WTC11 (cell line): ENCODE measurements at regions of chr16 and their contacts with region 1.

Region 1: DNA sequence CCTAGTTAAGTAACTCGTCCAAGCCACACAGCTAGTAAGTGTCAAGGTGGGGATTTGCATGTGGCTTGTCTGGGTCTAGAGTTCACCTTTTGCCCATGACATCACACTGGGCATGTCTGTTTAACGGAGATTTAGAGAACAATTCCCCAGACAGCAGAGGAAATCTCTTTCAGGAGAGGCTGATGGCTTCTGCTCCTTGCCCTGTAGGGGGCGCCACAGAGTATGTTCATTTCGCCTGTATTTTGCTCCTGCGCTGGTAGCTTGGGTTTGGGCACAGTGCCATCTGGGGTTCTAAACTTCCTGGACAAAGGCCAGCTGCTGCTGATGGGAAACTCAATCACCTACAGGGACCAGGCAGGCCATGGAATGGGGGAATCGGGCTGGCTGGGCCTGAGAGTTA is 20.4 kb downstream of the OTOA start:
- DNase-seq: peak; percentile 66
- ATAC-seq: peak; percentile 44; the same call in 1 of the 2 replicates
- H3K4me3 Mint-ChIP-seq: no peak overlapping the region
- H3K27ac Mint-ChIP-seq: no peak overlapping the region
- H3K4me1 Mint-ChIP-seq: no peaks in the 10 kb centered on the region
- H3K27me3 Mint-ChIP-seq: peaks cover 11% of the 10 kb centered on the region; the same call in 1 of the 2 replicates
- CTCF ChIP-seq: peak; percentile 90

Region 2: GRCh38 chr16:21673469-21673868 is 10.7 kb before region 1 on chr16:
- CTCF ChIA-PET with region 1: interaction called, 11 read pairs
- POLR2A ChIA-PET with region 1: no interaction called
- DNase-seq: no peak
- ATAC-seq: no peak
- H3K4me3 Mint-ChIP-seq: no peak overlapping the region
- H3K27ac Mint-ChIP-seq: no peak overlapping the region
- H3K4me1 Mint-ChIP-seq: no peaks in the 10 kb centered on the region
- H3K27me3 Mint-ChIP-seq: no peaks in the 10 kb centered on the region
- CTCF ChIP-seq: no peak

Region 3: GRCh38 chr16:21698169-21699032 is 14.2 kb after region 1 on chr16:
- CTCF ChIA-PET with region 1: interaction called, 14 read pairs
- POLR2A ChIA-PET with region 1: no interaction called
- DNase-seq: no peak
- ATAC-seq: no peak
- H3K4me3 Mint-ChIP-seq: no peak overlapping the region
- H3K27ac Mint-ChIP-seq: no peak overlapping the region
- H3K4me1 Mint-ChIP-seq: 0 out of 2 replicates have a peak, but pooled peaks cover 6% of the 10 kb centered on the region
- H3K27me3 Mint-ChIP-seq: no peaks in the 10 kb centered on the region
- CTCF ChIP-seq: no peak